ENCODE measurements at regions of chr2 and their contacts with region 1.

Region 1: GRCh38 chr2:155913356-155913755 is 419.2 kb downstream of the NR4A2 start:
- DNase-seq: no peak
- H3K4me3 ChIP-seq: no peak overlapping the region
- H3K27ac ChIP-seq: no peak overlapping the region
- H3K4me1 ChIP-seq: no peaks in the 10 kb centered on the region
- H3K27me3 ChIP-seq: no peaks in the 10 kb centered on the region
- CTCF ChIP-seq: no peak
- POLR2A ChIP-seq: no peak

Region 2: DNA sequence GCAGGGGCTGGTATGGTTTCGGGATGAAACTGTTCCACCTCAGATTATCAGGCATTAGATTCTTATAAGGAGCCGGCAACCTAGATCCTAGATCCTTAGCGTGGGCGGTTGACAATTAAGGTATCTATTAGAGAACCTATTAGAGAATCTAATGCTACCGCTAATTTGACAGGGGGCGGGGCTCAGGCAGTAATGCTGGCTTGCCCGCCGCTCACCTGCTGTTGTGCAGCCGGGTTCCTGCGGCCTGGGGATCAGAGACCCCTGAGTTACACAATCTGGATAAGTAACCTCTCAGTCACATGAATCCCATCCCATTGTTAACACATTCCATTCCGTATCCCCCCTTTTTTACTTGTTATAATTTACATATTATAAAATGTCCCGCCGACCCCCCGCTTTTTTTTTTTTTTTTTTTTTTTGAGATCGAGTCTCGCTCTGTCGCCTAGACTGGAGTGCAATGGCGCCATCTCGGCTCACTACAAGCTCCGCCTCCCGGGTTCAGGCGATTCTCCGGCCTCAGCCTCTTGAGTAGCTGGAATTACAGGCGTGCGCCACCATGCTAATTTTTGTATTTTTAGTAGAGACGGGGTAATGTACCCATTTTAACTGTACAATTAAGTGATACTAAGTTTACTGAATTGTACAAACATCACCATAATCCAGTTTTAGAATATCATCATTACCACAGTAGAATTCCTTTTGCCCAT is 480.8 kb after region 1 on chr2:
- CTCF ChIA-PET with region 1: no interaction called
- POLR2A ChIA-PET with region 1: interaction called, 11 read pairs
- dilution Hi-C with region 1: no loop called
- intact Hi-C with region 1: no loop called
- DNase-seq: no peak
- H3K4me3 ChIP-seq: no peak overlapping the region
- H3K27ac ChIP-seq: no peak overlapping the region
- H3K4me1 ChIP-seq: no peaks in the 10 kb centered on the region
- H3K27me3 ChIP-seq: no peaks in the 10 kb centered on the region
- CTCF ChIP-seq: no peak
- POLR2A ChIP-seq: no peak

Measured in endothelial cell of umbilical vein (primary cell).